ENCODE measurements at regions of chr7 and their contacts with region 1.

Region 1: DNA sequence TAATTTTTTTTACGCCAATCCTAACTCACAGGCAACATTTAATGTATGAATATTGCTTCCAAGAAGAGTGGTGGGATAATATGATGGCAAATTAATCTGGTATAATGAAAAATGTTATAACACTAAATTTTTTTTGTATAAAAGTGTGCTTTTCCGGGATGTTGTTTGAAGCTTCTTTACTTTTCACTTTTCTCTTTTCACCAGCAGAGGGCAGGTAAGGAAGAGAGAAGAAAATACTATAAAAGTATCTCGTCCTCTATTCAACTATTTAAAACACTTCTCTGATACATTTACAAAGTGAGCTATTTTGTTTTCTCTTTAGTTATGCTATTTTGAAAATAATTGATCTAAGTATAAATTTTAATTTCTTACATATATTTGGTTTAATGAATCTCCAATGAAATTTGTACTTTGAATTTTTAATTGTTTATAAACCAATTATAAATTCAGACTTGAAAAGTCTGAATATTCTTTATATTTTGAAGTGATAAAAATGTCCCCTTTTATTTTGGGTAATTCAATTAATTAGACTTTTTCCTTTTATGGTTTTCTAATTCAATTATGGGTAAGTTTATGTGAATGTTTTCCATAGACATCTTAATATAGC is 20.7 kb upstream of the CFTR start:
- DNase-seq: no peak

Region 2: DNA sequence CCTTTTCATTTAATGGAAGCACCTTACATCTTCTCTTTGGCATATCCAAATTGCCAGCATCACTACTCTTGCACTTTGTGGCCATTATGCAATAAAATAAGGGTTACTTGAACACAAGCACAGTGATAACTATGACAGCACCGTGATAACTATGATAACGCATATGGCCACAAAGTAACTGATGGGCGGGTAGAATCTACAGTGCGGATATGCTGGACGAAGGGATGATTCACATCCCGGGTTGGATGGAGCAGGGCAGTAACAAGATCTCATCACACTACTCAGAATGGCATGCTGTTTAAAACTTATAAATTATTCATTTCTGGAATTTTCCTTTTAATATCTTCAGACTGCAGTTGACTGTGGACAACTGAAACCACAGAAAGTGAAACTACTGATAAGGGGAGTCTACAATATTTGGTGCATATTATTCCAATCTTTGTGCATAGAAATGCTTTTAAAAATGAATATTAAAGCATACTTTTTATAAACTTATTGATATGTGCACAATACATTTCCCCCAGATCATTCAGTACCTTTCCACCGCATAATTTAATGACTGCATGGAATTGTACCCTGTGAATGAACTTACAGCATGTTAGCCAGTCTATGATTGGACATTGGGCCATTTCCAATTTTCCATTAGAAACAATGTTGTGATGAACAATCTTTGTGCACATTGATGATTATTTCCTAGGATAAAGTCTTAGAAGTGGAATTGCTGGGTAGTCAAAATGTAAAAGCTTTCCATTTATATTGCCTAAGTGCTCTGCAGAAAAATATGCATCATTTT is 272.7 kb before region 1 on chr7:
- intact Hi-C with region 1: no loop called
- DNase-seq: no peak

Region 3: GRCh38 chr7:117323851-117324701 is 135.0 kb before region 1 on chr7:
- intact Hi-C with region 1: no loop called
- DNase-seq: peak in 8 of 10 donors; percentile 12 to 87 (median 28)

Region 4: DNA sequence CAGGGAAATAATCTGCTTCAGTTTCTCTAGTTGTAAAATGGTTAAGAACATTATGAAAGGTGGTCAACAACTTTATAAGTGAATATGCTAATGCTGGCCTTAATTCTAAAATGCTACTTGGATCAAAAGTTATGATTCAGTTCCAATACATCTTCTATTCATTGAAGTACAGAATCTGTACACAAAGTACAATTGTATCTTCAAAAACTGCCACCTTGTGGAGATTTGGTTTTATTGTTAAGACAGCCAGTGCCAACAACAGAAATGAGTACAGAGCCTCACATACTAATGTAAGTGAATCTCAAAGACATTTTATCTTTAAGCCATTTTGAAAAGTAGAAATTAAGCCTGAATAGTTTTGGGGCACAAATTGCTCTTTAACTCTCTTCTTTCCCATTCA is 214.8 kb after region 1 on chr7:
- intact Hi-C with region 1: loop called (anchors 5 kb)
- DNase-seq: no peak

Region 5: DNA sequence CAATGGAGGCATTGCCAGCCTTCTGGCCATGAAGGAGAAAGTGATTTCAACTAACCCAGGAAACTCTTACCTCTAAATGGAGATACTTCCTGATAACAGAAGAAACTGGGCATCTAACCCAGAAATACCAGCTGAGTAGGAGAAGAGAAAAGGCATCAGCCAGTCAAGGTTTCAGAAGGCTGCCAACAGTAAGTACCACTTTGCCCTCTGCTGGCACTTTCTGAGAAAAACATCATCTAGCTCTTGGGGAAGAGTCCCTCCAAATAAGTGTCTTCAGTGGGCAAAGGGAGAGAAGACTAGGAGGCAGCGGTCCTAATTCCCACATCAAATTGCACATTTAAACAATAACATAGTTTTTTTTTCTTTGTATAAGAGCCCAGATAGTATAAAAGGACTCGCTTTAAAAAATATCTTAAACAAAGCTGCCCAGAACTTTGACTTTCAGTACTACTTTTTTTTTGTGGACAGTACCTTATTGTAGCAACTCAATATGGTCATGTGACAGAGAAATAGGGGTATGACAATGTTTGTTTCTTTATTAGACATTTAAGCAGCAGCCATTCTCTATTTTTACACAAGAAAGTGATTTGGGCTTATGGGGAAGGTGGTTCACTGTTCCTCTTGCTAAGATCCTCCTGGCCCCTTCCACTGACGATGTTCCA is 256.8 kb after region 1 on chr7:
- intact Hi-C with region 1: loop called (anchors 2 kb)
- DNase-seq: peak in 3 of 10 donors; percentile 15 to 53 (median 28)

Region 6: DNA sequence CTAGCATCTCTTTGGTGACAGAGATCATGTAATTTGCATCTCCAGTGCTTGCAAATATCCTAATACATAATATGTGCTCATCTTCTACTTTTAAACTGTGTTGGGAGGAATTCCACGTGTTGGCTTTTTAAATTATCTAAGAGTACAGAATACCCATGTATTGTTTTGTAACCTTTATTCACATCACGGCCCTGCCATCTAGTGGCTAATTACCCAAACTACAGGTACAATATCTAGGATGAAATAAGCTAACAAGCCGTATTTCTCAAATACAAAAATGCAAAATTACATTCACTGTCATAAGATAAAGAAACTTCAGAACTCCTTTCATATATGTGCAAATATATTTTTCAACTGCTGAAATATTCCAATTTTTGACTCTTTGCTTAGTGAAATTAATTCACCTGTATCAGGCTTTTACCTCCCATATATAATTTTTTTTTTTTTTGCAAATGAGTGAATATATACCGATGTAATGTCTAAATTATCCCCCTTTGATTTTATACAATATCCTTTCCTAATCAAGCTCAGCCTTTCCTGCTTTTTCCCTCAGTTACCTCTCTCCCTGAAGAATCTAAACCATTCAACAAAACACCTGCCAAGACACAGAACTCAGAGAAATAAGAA is 694.6 kb after region 1 on chr7:
- intact Hi-C with region 1: loop called (anchors 2 kb)
- DNase-seq: no peak